Naive thymus-derived CD4-positive, alpha-beta T cell (primary cell): ENCODE measurements at regions of chr17 and their contacts with region 1.

Region 1: GRCh38 chr17:50397111-50397918 is at the start of gene LRRC59:
- DNase-seq: peak; percentile 86 to 99 (median 93)
- ATAC-seq: peak; percentile 100
- H3K4me3 ChIP-seq: peak within 1 kb of the TSS; percentile 69
- H3K4me3 Mint-ChIP-seq: peak within 1 kb of the TSS; percentile 78 to 99 (median 92)
- H3K27ac ChIP-seq: peak within 1 kb of the TSS; percentile 93
- H3K27ac Mint-ChIP-seq: peak within 1 kb of the TSS; percentile 83 to 96 (median 93)
- H3K4me1 ChIP-seq: peaks cover 15 to 18% of the 10 kb centered on the region in 2 donors
- H3K4me1 Mint-ChIP-seq: peaks cover 21 to 47% (median 34%) of the 10 kb centered on the region in 7 donors
- H3K27me3 ChIP-seq: no peaks in the 10 kb centered on the region
- H3K27me3 Mint-ChIP-seq: no peaks in the 10 kb centered on the region
- total RNA-seq, gene LRRC59: 27.6 to 67.1 (median 42.4) TPM

Region 2: GRCh38 chr17:50372758-50373556 is 24.4 kb before region 1 on chr17 and contains the starts of genes EME1 and MRPL27:
- CTCF ChIA-PET with region 1: interaction called, 6 read pairs
- POLR2A ChIA-PET with region 1: interaction called, 16 read pairs
- intact Hi-C with region 1: loop called (anchors 1 kb)
- DNase-seq: peak; percentile 81 to 95 (median 92)
- ATAC-seq: peak; percentile 94
- H3K4me3 ChIP-seq: peak within 1 kb of the TSS; percentile 99
- H3K4me3 Mint-ChIP-seq: peak within 1 kb of the TSS; percentile 92 to 100 (median 98)
- H3K27ac ChIP-seq: peak within 1 kb of the TSS; percentile 99
- H3K27ac Mint-ChIP-seq: peak within 1 kb of the TSS; percentile 97 to 100 (median 99)
- H3K4me1 ChIP-seq: peaks cover 9 to 13% of the 10 kb centered on the region in 2 donors
- H3K4me1 Mint-ChIP-seq: peaks cover 18 to 41% (median 31%) of the 10 kb centered on the region in 7 donors
- H3K27me3 ChIP-seq: no peaks in the 10 kb centered on the region
- H3K27me3 Mint-ChIP-seq: no peaks in the 10 kb centered on the region
- total RNA-seq, gene EME1: 0.61 to 17.5 (median 2.2) TPM
- total RNA-seq, gene MRPL27: 29.5 to 64.7 (median 32.0) TPM